ENCODE measurements at regions of chr17 and their contacts with region 1.

Region 1: GRCh38 chr17:37609170-37610040 is at the start of gene SYNRG:
- DNase-seq: peak; percentile 98
- ATAC-seq: peak; percentile 85
- H3K4me3 Mint-ChIP-seq: peak within 1 kb of the TSS; percentile 94
- H3K27ac Mint-ChIP-seq: peak within 1 kb of the TSS; percentile 92
- H3K4me1 Mint-ChIP-seq: peaks cover 42% of the 10 kb centered on the region
- H3K27me3 Mint-ChIP-seq: no peaks in the 10 kb centered on the region
- CTCF ChIP-seq: no peak
- total RNA-seq, gene SYNRG: 83.7 and 89.8 TPM in 2 replicates

Region 2: GRCh38 chr17:37465069-37465616 is 144.3 kb before region 1 on chr17:
- CTCF ChIA-PET with region 1: no interaction called
- POLR2A ChIA-PET with region 1: no interaction called
- intact Hi-C with region 1: no loop called
- DNase-seq: no peak
- ATAC-seq: no peak
- H3K4me3 Mint-ChIP-seq: no peak overlapping the region
- H3K27ac Mint-ChIP-seq: no peak overlapping the region
- H3K4me1 Mint-ChIP-seq: no peaks in the 10 kb centered on the region
- H3K27me3 Mint-ChIP-seq: no peaks in the 10 kb centered on the region
- CTCF ChIP-seq: no peak

Region 3: GRCh38 chr17:37489197-37490001 is 120.0 kb before region 1 on chr17 and contains the start of gene DUSP14:
- CTCF ChIA-PET with region 1: no interaction called
- POLR2A ChIA-PET with region 1: no interaction called
- intact Hi-C with region 1: loop called (anchors 1 kb)
- DNase-seq: peak; percentile 79
- ATAC-seq: peak; percentile 82
- H3K4me3 Mint-ChIP-seq: peak within 1 kb of the TSS; percentile 95
- H3K27ac Mint-ChIP-seq: peak within 1 kb of the TSS; percentile 82
- H3K4me1 Mint-ChIP-seq: peaks cover 26% of the 10 kb centered on the region
- H3K27me3 Mint-ChIP-seq: no peaks in the 10 kb centered on the region
- CTCF ChIP-seq: no peak
- total RNA-seq, gene DUSP14: 4.3 TPM in 2 replicates

Region 4: DNA sequence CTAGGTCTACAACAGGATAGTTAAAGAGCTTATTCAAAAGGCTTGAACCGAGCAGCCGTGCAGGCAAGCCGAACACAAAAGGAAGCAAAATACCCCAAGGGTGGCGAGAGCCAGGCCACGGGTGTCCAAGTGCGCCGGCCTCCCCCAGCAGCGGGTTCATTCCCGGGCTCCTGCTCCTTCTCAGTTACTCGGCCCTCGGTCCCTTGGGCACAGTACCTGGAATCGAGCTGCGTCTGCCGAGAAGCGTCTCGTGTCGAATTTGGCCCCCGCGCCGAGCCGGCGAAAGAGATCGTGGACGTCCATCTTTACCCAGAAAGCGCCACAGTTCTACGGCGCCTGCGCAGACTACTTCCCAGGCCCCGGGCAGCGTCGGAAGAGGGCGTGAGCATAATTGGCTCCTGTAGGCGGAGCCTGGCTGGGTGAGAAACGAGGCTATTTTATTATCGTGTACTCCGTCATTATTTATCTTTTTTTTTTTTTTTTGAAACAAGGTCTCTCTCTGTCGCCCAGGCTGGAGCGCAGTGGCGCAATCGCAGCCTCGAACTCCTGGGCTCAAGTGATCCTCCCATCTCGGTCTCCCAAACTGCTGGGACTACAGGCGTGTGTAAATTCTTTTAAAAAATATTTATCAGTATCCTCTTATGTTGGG is 33.8 kb after region 1 on chr17 and contains the start of gene DDX52:
- CTCF ChIA-PET with region 1: interaction called, 6 read pairs
- POLR2A ChIA-PET with region 1: interaction called, 12 read pairs
- intact Hi-C with region 1: loop called (anchors 2 kb)
- DNase-seq: peak; percentile 78
- ATAC-seq: peak; percentile 99
- H3K4me3 Mint-ChIP-seq: peak within 1 kb of the TSS; percentile 95
- H3K27ac Mint-ChIP-seq: peak within 1 kb of the TSS; percentile 90
- H3K4me1 Mint-ChIP-seq: peaks cover 38% of the 10 kb centered on the region
- H3K27me3 Mint-ChIP-seq: peaks cover 9% of the 10 kb centered on the region
- CTCF ChIP-seq: no peak
- total RNA-seq, gene DDX52: 35.6 and 39.9 TPM in 2 replicates

Region 5: GRCh38 chr17:37770631-37771518 is 161.5 kb after region 1 on chr17:
- CTCF ChIA-PET with region 1: no interaction called
- POLR2A ChIA-PET with region 1: interaction called, 16 read pairs
- intact Hi-C with region 1: no loop called
- DNase-seq: no peak
- ATAC-seq: no peak
- H3K4me3 Mint-ChIP-seq: no peak overlapping the region
- H3K27ac Mint-ChIP-seq: no peak overlapping the region
- H3K4me1 Mint-ChIP-seq: peaks cover 71% of the 10 kb centered on the region
- H3K27me3 Mint-ChIP-seq: no peaks in the 10 kb centered on the region
- CTCF ChIP-seq: no peak